HCT116 (cell line): ENCODE measurements at regions of chr4 and their contacts with region 1.

Region 1: GRCh38 chr4:166165829-166166420 is 292.9 kb downstream of the TLL1 start:
- DNase-seq: peak; percentile 77
- ATAC-seq: peak; percentile 92
- H3K4me3 ChIP-seq: no peak overlapping the region
- H3K27ac ChIP-seq: no peak overlapping the region
- H3K4me1 ChIP-seq: no peaks in the 10 kb centered on the region
- H3K27me3 ChIP-seq: no peaks in the 10 kb centered on the region
- CTCF ChIP-seq: peak; percentile 63 to 86 (median 74)
- POLR2A ChIP-seq: no peak
- RAD21 ChIP-seq: peak; percentile 92

Region 2: DNA sequence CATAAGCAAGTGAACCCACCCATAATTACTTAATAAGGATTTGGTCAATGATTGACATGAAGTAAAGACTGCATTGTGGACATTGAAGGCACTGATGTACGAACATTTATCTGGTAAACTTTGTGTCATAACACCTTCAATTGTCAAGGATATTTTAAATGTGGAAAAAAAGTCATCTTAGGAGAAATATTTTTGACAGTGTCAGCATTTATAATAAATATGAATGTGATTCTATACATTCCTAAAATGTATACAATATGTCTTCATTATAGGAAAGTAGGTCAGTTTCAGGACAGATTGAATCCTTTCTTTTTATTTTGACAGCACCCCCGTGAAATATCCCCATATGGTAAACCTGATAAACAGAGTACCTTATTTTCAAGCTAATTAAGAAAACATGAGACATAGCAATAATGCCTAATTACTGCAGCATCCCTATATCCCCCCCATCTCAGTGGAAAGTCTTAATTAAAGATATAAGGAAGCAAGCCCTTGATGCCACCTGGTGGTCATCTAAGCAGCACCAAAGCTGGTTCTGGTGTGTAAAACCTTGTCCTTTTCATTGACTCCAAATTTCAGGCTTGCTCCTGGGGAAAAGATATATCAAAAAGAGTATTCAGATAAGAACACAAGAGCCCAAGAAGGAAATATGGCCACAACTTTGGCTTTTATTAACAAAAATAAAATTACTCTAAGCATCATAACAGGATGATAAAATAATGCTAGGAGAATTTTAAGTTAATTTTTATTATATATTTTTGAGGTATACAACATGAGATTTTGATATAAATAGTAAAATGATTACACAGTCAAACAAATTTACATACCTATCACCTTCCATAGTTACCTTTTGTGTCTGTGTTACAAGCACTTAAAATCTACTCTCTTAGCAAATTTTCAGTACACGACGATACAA is 86.8 kb after region 1 on chr4:
- CTCF ChIA-PET with region 1: interaction called, 7 read pairs
- POLR2A ChIA-PET with region 1: no interaction called
- RAD21 ChIA-PET with region 1: no interaction called
- intact Hi-C with region 1: loop called (anchors 1 kb)
- DNase-seq: peak; percentile 37
- ATAC-seq: peak; percentile 77
- H3K4me3 ChIP-seq: no peak overlapping the region
- H3K27ac ChIP-seq: no peak overlapping the region
- H3K4me1 ChIP-seq: no peaks in the 10 kb centered on the region
- H3K27me3 ChIP-seq: no peaks in the 10 kb centered on the region
- CTCF ChIP-seq: peak; percentile 52 to 81 (median 72); a peak in 5 of 6 replicates
- POLR2A ChIP-seq: no peak
- RAD21 ChIP-seq: peak; percentile 59

Region 3: GRCh38 chr4:167014944-167015343 is 849.0 kb after region 1 on chr4:
- CTCF ChIA-PET with region 1: no interaction called
- POLR2A ChIA-PET with region 1: no interaction called
- RAD21 ChIA-PET with region 1: no interaction called
- intact Hi-C with region 1: loop called (anchors 10 kb)
- DNase-seq: no peak
- ATAC-seq: no peak
- H3K4me3 ChIP-seq: no peak overlapping the region
- H3K27ac ChIP-seq: no peak overlapping the region
- H3K4me1 ChIP-seq: no peaks in the 10 kb centered on the region
- H3K27me3 ChIP-seq: no peaks in the 10 kb centered on the region
- CTCF ChIP-seq: no peak
- POLR2A ChIP-seq: no peak
- RAD21 ChIP-seq: peak; percentile 26; the same call in 1 of the 2 replicates

Region 4: GRCh38 chr4:168076989-168077725 is 1911.2 kb after region 1 on chr4:
- CTCF ChIA-PET with region 1: no interaction called
- POLR2A ChIA-PET with region 1: no interaction called
- RAD21 ChIA-PET with region 1: no interaction called
- intact Hi-C with region 1: loop called (anchors 5 kb)
- DNase-seq: peak; percentile 88
- ATAC-seq: peak; percentile 78
- H3K4me3 ChIP-seq: no peak overlapping the region
- H3K27ac ChIP-seq: peak overlapping the region; percentile 85
- H3K4me1 ChIP-seq: peaks cover 7 to 21% of the 10 kb centered on the region in 2 experiments
- H3K27me3 ChIP-seq: no peaks in the 10 kb centered on the region
- CTCF ChIP-seq: peak; percentile 74 to 93 (median 91); a peak in 5 of 6 replicates
- POLR2A ChIP-seq: no peak
- RAD21 ChIP-seq: peak; percentile 96